Caco-2 (cell line): ENCODE measurements at regions of chr10 and their contacts with region 1.

Region 1: GRCh38 chr10:5629303-5630111 is 36.9 kb downstream of the ASB13 start:
- DNase-seq: peak; percentile 86 to 92
- H3K4me3 ChIP-seq: no peak overlapping the region
- H3K4me3 Mint-ChIP-seq: no peak overlapping the region
- H3K27ac Mint-ChIP-seq: no peak overlapping the region
- H3K4me1 ChIP-seq: peaks cover 21% of the 10 kb centered on the region
- H3K4me1 Mint-ChIP-seq: peaks cover 25% of the 10 kb centered on the region
- H3K27me3 ChIP-seq: no peaks in the 10 kb centered on the region
- H3K27me3 Mint-ChIP-seq: no peaks in the 10 kb centered on the region
- CTCF ChIP-seq: peak; percentile 97 to 98

Region 2: GRCh38 chr10:5002013-5002727 is 627.3 kb before region 1 on chr10:
- CTCF ChIA-PET with region 1: no interaction called
- POLR2A ChIA-PET with region 1: no interaction called
- intact Hi-C with region 1: no loop called
- DNase-seq: no peak
- H3K4me3 ChIP-seq: no peak overlapping the region
- H3K4me3 Mint-ChIP-seq: peak overlapping the region; percentile 19
- H3K27ac Mint-ChIP-seq: no peak overlapping the region
- H3K4me1 ChIP-seq: 0 out of 2 replicates have a peak, but pooled peaks cover 7% of the 10 kb centered on the region
- H3K4me1 Mint-ChIP-seq: no peaks in the 10 kb centered on the region
- H3K27me3 ChIP-seq: no peaks in the 10 kb centered on the region
- H3K27me3 Mint-ChIP-seq: no peaks in the 10 kb centered on the region
- CTCF ChIP-seq: no peak

Region 3: DNA sequence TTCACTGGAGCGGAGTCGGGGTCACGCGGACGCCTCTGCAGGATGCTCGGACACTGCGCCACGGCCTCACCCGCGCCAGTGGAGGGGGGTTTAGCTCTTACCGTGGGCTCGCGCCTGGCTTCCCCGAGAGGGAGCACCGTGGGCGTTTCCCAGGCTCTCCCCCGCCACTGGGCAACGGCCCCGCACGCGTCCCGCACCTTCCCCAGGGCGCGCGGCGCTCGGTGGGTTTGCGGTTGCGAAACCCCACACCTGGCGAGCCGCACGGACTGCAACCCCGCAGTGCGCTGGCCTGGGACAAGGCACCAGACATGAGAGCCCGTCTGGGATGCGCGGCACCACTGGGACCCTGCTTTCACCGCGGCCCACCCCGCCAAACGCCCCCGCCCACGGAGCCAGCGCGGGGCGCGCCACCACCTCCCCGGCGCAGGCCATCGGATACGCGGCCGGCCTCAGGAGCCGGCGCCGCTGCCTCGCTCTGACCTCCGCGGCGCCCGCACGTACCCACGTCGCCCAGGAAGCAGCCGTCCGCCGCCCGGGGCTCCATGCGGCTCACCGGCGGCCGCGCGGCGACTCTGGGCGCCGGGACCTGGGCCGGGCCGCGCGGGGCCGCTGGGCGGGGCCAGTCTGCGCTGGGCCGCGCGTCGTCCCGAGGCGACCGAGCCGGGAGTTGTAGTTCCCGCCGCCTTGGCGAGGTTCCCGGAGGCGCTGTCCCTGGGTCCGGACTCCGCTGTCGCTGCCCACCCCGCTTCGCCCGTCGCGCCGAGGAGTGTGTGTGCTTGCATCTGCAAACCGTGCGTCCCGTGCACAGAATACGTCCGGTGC is 36.7 kb after region 1 on chr10 and contains the start of gene ASB13:
- CTCF ChIA-PET with region 1: interaction called, 7 read pairs
- POLR2A ChIA-PET with region 1: no interaction called
- intact Hi-C with region 1: loop called (anchors 1 kb)
- DNase-seq: peak; percentile 77 to 89
- H3K4me3 ChIP-seq: peak within 1 kb of the TSS; percentile 100
- H3K4me3 Mint-ChIP-seq: peak within 1 kb of the TSS; percentile 86
- H3K27ac Mint-ChIP-seq: peak within 1 kb of the TSS; percentile 72
- H3K4me1 ChIP-seq: peaks cover 21% of the 10 kb centered on the region
- H3K4me1 Mint-ChIP-seq: peaks cover 6% of the 10 kb centered on the region
- H3K27me3 ChIP-seq: no peaks in the 10 kb centered on the region
- H3K27me3 Mint-ChIP-seq: no peaks in the 10 kb centered on the region
- CTCF ChIP-seq: peak in 1 of 2 experiments; percentile 33
- total RNA-seq, gene ASB13: 37.0 and 44.8 TPM in 2 replicates

Region 4: DNA sequence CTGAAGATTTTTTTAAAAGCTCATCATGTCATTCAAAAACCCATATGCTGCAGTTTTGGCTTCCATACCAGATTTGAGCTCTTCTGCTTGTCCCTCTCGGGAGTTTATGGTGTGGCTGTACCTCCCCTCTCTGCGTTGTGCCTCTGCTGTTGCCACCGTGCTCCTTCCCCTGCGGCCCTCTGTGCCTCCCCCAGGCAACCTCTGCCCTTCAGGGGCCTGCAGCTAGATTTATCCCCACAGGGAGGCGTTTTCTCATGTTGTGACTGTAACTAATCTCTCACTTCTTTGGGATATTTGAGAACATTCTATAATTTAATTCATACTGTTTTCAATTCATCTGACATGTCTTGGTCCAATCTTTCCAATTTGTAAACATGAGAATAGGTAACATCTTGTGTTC is 107.8 kb after region 1 on chr10:
- CTCF ChIA-PET with region 1: no interaction called
- POLR2A ChIA-PET with region 1: no interaction called
- intact Hi-C with region 1: loop called (anchors 5 kb)
- DNase-seq: no peak
- H3K4me3 ChIP-seq: no peak overlapping the region
- H3K4me3 Mint-ChIP-seq: no peak overlapping the region
- H3K27ac Mint-ChIP-seq: peak overlapping the region; percentile 21
- H3K4me1 ChIP-seq: no peaks in the 10 kb centered on the region
- H3K4me1 Mint-ChIP-seq: no peaks in the 10 kb centered on the region
- H3K27me3 ChIP-seq: no peaks in the 10 kb centered on the region
- H3K27me3 Mint-ChIP-seq: no peaks in the 10 kb centered on the region
- CTCF ChIP-seq: peak; percentile 17 to 20

Region 5: GRCh38 chr10:5873515-5873995 is 244.0 kb after region 1 on chr10:
- CTCF ChIA-PET with region 1: no interaction called
- POLR2A ChIA-PET with region 1: no interaction called
- intact Hi-C with region 1: loop called (anchors 1 kb)
- DNase-seq: peak; percentile 65 to 82
- H3K4me3 ChIP-seq: no peak overlapping the region
- H3K4me3 Mint-ChIP-seq: no peak overlapping the region
- H3K27ac Mint-ChIP-seq: no peak overlapping the region
- H3K4me1 ChIP-seq: no peaks in the 10 kb centered on the region
- H3K4me1 Mint-ChIP-seq: no peaks in the 10 kb centered on the region
- H3K27me3 ChIP-seq: no peaks in the 10 kb centered on the region
- H3K27me3 Mint-ChIP-seq: no peaks in the 10 kb centered on the region
- CTCF ChIP-seq: peak; percentile 65 to 79